Mammary epithelial cell (primary cell): ENCODE measurements at regions of chr2 and their contacts with region 1.

Region 1: DNA sequence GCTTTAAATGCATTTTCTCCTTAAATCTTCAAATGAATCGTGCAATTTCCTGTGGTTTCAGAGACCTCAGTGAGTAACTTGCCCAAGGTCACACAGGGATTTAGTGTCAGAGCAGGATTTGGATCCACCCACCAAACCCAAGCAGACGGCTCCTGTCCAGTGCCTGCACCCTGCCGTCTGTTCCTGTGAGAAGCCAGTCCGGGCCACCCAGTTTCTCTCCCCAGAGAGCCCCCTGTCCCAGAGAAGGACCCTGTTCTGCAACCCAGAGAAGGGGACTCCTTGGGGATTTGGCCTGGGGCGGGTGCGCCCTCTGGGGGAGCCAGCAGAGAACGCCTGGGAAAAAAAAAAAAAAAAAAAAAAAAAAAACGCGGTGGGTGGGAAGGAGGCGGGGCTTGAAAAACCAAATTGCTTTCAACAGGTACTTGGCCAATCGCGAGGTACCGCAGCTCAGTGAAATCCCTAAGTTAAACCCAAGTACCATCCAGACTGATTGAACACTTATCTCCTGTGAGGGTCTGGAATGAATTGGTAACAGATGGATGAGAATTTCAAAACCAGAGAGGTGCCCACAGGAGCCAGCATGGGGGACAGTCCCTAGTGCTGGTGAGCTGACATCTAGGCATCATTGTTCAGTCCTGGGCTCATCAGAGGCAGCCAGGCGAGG is 30.9 kb upstream of the REEP1 start:
- DNase-seq: peak; percentile 20
- H3K4me3 ChIP-seq: no peak overlapping the region
- H3K27ac ChIP-seq: no peak overlapping the region
- H3K4me1 ChIP-seq: peaks cover 4% of the 10 kb centered on the region
- H3K27me3 ChIP-seq: no peaks in the 10 kb centered on the region
- CTCF ChIP-seq: peak; percentile 29 to 53

Region 2: DNA sequence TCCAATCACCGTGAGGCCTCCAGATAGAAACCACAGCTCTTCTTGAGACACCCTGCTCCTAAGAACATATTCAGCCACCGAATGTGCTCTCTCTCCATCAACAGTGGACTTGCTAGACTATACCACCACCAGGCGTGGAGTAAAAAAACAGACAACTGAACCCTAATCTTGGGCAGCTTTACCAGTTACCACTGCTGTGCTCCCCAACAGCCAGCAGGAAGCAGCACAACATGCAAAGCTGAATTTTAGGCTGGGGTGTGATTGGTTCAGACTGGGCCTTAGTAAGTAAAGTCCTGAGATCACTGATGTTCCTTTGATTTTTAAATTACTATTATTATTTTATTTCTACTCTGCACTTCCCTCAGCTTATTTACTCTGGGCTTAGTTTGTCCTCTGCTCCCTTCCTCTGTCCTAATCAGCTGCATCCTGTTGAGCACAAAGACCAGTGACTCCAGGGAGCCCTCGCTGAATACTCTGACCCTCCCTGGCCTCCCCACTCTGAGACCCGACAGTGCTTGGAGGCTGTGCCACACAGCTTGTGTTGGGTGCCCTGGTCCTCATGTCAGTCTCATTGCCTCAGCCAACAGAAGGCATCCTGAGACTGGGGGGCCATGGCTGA is 147.1 kb before region 1 on chr2:
- CTCF ChIA-PET with region 1: no interaction called
- dilution Hi-C with region 1: no loop called
- in situ Hi-C with region 1: loop called in 1 of 2 experiments (anchors 25 kb)
- intact Hi-C with region 1: loop called (anchors 1 kb)
- DNase-seq: peak; percentile 32
- H3K4me3 ChIP-seq: no peak overlapping the region
- H3K27ac ChIP-seq: no peak overlapping the region
- H3K4me1 ChIP-seq: no peaks in the 10 kb centered on the region
- H3K27me3 ChIP-seq: no peaks in the 10 kb centered on the region
- CTCF ChIP-seq: peak; percentile 58 to 81